Ovary (tissue), 10 donors: ENCODE measurements at regions of chr9 and their contacts with region 1.

Region 1: DNA sequence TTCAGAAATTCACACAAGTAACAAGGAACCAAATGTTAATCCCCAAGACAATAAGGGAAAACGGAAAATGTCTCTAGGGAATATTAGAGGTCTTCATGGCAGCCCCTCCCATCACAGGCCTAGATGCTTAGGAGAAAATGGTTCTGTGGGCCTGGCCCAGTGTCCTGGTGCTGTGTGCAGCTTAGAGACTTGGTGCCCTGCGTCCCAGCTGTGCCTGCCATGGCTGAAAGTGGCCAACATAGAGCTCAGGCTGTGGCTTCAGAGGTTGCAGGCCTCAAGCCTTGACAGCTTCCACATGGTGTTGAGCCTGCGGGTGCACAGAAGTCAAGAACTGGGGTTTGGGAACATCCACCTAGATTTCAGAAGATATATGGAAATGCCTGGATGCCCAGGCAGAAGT is 942.3 kb downstream of the PTPRD start:
- DNase-seq: no peak
- H3K4me3 ChIP-seq: no peak overlapping the region
- H3K27ac ChIP-seq: no peak overlapping the region
- H3K4me1 ChIP-seq: no peaks in the 10 kb centered on the region
- H3K27me3 ChIP-seq: no peaks in the 10 kb centered on the region
- CTCF ChIP-seq: no peak
- EP300 ChIP-seq: no peak
- POLR2A ChIP-seq: no peak

Region 2: DNA sequence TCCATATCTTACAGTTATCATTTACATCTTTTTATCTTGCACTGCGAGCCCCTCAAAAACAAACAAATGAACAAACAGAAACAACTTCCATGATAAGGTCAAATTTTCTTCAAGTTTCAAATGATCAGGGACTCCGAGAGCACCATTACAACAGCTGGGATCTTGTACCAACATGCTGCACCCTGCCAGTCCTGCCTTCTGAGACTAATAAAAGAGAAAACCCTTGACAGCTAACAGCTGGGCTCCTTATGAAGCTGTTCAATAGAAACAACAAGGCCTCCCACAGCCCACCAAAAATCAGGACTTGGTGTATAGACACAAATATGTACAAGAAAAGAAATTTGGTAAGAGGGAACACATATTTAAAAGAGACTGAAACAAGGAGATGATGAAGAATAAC is 885.6 kb before region 1 on chr9:
- intact Hi-C with region 1: no loop called
- DNase-seq: no peak
- H3K4me3 ChIP-seq: no peak overlapping the region
- H3K27ac ChIP-seq: peak overlapping the region in 1 of 2 donors; percentile 78
- H3K4me1 ChIP-seq: peaks cover 8% of the 10 kb centered on the region
- H3K27me3 ChIP-seq: no peaks in the 10 kb centered on the region
- CTCF ChIP-seq: no peak
- EP300 ChIP-seq: no peak
- POLR2A ChIP-seq: no peak

Region 3: GRCh38 chr9:9448796-9449195 is 221.7 kb before region 1 on chr9:
- intact Hi-C with region 1: loop called in 1 of 4 experiments (anchors 5 kb)
- DNase-seq: no peak
- H3K4me3 ChIP-seq: no peak overlapping the region
- H3K27ac ChIP-seq: no peak overlapping the region
- H3K4me1 ChIP-seq: no peaks in the 10 kb centered on the region
- H3K27me3 ChIP-seq: no peaks in the 10 kb centered on the region
- CTCF ChIP-seq: no peak
- EP300 ChIP-seq: no peak
- POLR2A ChIP-seq: no peak